ENCODE measurements at regions of chr10 and their contacts with region 1.

Region 1: DNA sequence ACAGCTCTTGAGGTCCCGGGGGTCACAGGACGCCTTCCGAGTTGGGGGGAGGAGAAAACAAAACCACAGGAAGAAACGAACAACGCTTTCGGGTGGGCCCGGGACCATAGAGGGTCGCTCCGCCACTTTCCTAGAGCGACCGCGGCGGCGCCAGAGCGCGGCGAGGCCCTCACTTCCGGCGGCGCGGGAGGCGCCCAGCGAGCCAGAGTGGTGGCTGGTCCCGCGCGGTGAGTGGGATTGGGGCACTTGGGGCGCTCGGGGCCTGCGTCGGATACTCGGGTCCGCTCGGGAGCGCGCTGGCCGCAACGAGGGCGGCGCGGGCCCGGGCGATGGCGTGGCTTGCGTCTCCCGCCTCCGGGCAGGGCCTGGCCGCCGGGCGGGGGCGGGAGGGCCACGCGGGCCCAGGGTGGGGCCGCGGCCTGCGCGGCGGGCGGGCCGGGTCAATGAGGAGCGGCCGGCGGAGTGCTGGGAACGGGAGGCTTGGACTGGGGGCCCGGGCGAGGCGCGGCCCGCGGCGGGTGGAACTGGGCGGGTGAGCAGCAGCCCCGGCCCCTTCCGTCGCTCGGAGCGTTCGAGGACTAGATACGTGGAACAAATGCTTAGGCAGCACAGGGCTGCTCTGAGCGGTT is at the start of gene ZNF22:
- DNase-seq: peak in 1 of 2 experiments; percentile 84
- H3K4me3 ChIP-seq: peak within 1 kb of the TSS; percentile 50 to 95 (median 64)
- H3K27ac ChIP-seq: no peak within 1 kb of the TSS; the same call in 1 of the 2 replicates
- H3K4me1 ChIP-seq: peaks cover 2 to 6% (median 4%) of the 10 kb centered on the region in 4 experiments; a peak in 4 of 7 replicates
- H3K27me3 ChIP-seq: peaks cover 0 to 4% (median 4%) of the 10 kb centered on the region in 4 experiments; a peak in 4 of 7 replicates
- CTCF ChIP-seq: no peak
- EP300 ChIP-seq: no peak
- POLR2A ChIP-seq: peak in 1 of 2 experiments; percentile 86; a peak in 2 of 3 replicates
- RAD21 ChIP-seq: no peak
- total RNA-seq, gene ZNF22: 42.5 and 45.2 TPM in 2 replicates

Region 2: GRCh38 chr10:44947371-44948152 is 53.3 kb before region 1 on chr10:
- CTCF ChIA-PET with region 1: no interaction called
- POLR2A ChIA-PET with region 1: no interaction called
- DNase-seq: peak in 1 of 2 experiments; percentile 28
- H3K4me3 ChIP-seq: no peak overlapping the region
- H3K27ac ChIP-seq: no peak overlapping the region
- H3K4me1 ChIP-seq: peaks cover 0 to 1% (median 0%) of the 10 kb centered on the region in 4 experiments; a peak in 1 of 7 replicates
- H3K27me3 ChIP-seq: no peaks in the 10 kb centered on the region; a peak in 1 of 7 replicates
- CTCF ChIP-seq: no peak
- EP300 ChIP-seq: no peak
- POLR2A ChIP-seq: no peak
- RAD21 ChIP-seq: no peak

Region 3: GRCh38 chr10:44974628-44975431 is 26.0 kb before region 1 on chr10:
- CTCF ChIA-PET with region 1: interaction called, 84 read pairs
- POLR2A ChIA-PET with region 1: interaction called, 23 read pairs
- DNase-seq: peak in 1 of 2 experiments; percentile 88
- H3K4me3 ChIP-seq: peak overlapping the region; percentile 32 to 64 (median 46)
- H3K27ac ChIP-seq: no peak overlapping the region; the same call in 1 of the 2 replicates
- H3K4me1 ChIP-seq: peaks cover 25 to 51% (median 36%) of the 10 kb centered on the region in 4 experiments
- H3K27me3 ChIP-seq: no peaks in the 10 kb centered on the region; a peak in 1 of 7 replicates
- CTCF ChIP-seq: peak; percentile 70 to 87 (median 77)
- EP300 ChIP-seq: no peak
- POLR2A ChIP-seq: no peak
- RAD21 ChIP-seq: peak; percentile 53 to 77

Region 4: GRCh38 chr10:44990302-44990655 is 10.6 kb before region 1 on chr10:
- CTCF ChIA-PET with region 1: interaction called, 10 read pairs
- POLR2A ChIA-PET with region 1: interaction called, 10 read pairs
- DNase-seq: peak; percentile 64 to 69
- H3K4me3 ChIP-seq: peak overlapping the region in 2 of 4 experiments; percentile 14 to 16; a peak in 2 of 8 replicates
- H3K27ac ChIP-seq: no peak overlapping the region; the same call in 1 of the 2 replicates
- H3K4me1 ChIP-seq: peaks cover 9 to 43% (median 26%) of the 10 kb centered on the region in 4 experiments; a peak in 6 of 7 replicates
- H3K27me3 ChIP-seq: peaks cover 0 to 3% (median 1%) of the 10 kb centered on the region in 4 experiments; a peak in 4 of 7 replicates
- CTCF ChIP-seq: peak; percentile 78 to 87 (median 82)
- EP300 ChIP-seq: no peak
- POLR2A ChIP-seq: no peak
- RAD21 ChIP-seq: peak; percentile 60 to 73

Region 5: GRCh38 chr10:45235798-45236231 is 234.9 kb after region 1 on chr10:
- CTCF ChIA-PET with region 1: interaction called, 11 read pairs
- POLR2A ChIA-PET with region 1: no interaction called
- DNase-seq: no peak
- H3K4me3 ChIP-seq: no peak overlapping the region
- H3K27ac ChIP-seq: no peak overlapping the region
- H3K4me1 ChIP-seq: no peaks in the 10 kb centered on the region
- H3K27me3 ChIP-seq: peaks cover 0 to 1% (median 0%) of the 10 kb centered on the region in 4 experiments; a peak in 1 of 7 replicates
- CTCF ChIP-seq: no peak
- EP300 ChIP-seq: no peak
- POLR2A ChIP-seq: no peak
- RAD21 ChIP-seq: no peak

Measured in H1 (cell line).